MCF 10A (cell line): ENCODE measurements at regions of chr10 and their contacts with region 1.

Region 1: GRCh38 chr10:109883859-109884771 is 39.2 kb downstream of the XPNPEP1 start:
- DNase-seq: peak; percentile 90
- H3K4me3 Mint-ChIP-seq: no peak overlapping the region
- H3K27ac Mint-ChIP-seq: no peak overlapping the region
- H3K4me1 Mint-ChIP-seq: no peaks in the 10 kb centered on the region
- H3K27me3 Mint-ChIP-seq: no peaks in the 10 kb centered on the region
- CTCF ChIP-seq: peak; percentile 92

Region 2: DNA sequence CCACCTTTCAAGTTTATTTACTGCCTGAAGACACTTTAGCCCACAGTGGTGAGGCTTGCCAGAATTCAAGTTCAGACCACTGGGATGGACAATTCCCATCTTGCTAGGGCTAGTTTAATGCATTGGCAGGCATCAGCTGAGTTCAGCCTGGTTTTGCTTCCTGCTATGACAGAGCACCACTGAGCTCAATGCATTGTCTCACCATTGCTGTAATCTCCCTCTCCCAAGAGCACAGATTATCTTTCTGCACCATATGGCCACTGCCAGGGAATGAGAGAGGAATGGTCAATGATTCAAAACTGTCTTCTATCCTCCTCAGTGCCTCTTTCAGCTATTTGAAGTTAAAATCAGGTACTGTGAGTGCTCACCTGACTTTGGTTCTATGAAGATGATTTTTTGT is 121.6 kb before region 1 on chr10:
- CTCF ChIA-PET with region 1: no interaction called
- POLR2A ChIA-PET with region 1: no interaction called
- intact Hi-C with region 1: no loop called
- DNase-seq: no peak
- H3K4me3 Mint-ChIP-seq: no peak overlapping the region
- H3K27ac Mint-ChIP-seq: no peak overlapping the region
- H3K4me1 Mint-ChIP-seq: no peaks in the 10 kb centered on the region
- H3K27me3 Mint-ChIP-seq: no peaks in the 10 kb centered on the region
- CTCF ChIP-seq: no peak

Region 3: DNA sequence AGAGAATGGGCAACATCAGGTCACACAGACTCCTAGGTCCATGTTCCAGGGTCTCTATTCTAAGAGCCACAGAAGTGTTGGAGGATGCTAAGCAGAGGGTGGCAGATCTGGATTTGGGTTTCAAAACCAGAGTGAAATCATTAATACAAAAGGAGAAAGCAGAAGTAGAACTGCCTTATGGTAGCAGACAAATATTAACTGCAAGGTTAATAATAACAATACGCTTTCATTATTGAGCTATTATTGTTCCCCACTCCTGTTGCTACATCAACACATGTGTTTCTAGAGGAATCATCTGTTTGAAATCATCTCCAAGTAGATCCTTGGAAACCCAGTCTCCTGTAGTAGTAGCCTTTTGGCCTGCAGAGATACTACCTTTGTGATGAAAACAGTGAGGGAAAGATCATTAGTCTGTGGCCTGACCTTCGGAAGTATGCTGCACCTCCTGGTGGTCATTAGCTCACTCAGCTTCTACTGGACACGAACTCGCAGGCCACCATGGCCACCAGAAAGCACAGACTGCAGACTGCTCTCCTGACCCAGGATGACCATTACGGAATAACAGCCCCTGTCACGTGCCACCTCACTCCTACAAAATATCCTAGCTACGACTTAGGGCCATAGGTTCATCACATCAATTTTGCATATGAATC is 45.4 kb before region 1 on chr10:
- CTCF ChIA-PET with region 1: no interaction called
- POLR2A ChIA-PET with region 1: no interaction called
- intact Hi-C with region 1: no loop called
- DNase-seq: no peak
- H3K4me3 Mint-ChIP-seq: no peak overlapping the region
- H3K27ac Mint-ChIP-seq: no peak overlapping the region
- H3K4me1 Mint-ChIP-seq: no peaks in the 10 kb centered on the region
- H3K27me3 Mint-ChIP-seq: no peaks in the 10 kb centered on the region
- CTCF ChIP-seq: no peak

Region 4: GRCh38 chr10:109894516-109894915 is 10.4 kb after region 1 on chr10:
- CTCF ChIA-PET with region 1: interaction called, 44 read pairs
- POLR2A ChIA-PET with region 1: interaction called, 7 read pairs
- intact Hi-C with region 1: no loop called
- DNase-seq: peak; percentile 90
- H3K4me3 Mint-ChIP-seq: peak overlapping the region; percentile 31
- H3K27ac Mint-ChIP-seq: peak overlapping the region; percentile 83
- H3K4me1 Mint-ChIP-seq: peaks cover 38% of the 10 kb centered on the region
- H3K27me3 Mint-ChIP-seq: no peaks in the 10 kb centered on the region
- CTCF ChIP-seq: no peak

Region 5: GRCh38 chr10:109922976-109923921 is 39.1 kb after region 1 on chr10 and contains the start of gene XPNPEP1:
- CTCF ChIA-PET with region 1: interaction called, 5 read pairs
- POLR2A ChIA-PET with region 1: interaction called, 122 read pairs
- intact Hi-C with region 1: loop called (anchors 2 kb)
- DNase-seq: peak; percentile 79
- H3K4me3 Mint-ChIP-seq: peak within 1 kb of the TSS; percentile 67
- H3K27ac Mint-ChIP-seq: peak within 1 kb of the TSS; percentile 91
- H3K4me1 Mint-ChIP-seq: peaks cover 34% of the 10 kb centered on the region
- H3K27me3 Mint-ChIP-seq: no peaks in the 10 kb centered on the region
- CTCF ChIP-seq: no peak
- total RNA-seq, gene XPNPEP1: 51.6 and 52.1 TPM in 2 replicates

Region 6: DNA sequence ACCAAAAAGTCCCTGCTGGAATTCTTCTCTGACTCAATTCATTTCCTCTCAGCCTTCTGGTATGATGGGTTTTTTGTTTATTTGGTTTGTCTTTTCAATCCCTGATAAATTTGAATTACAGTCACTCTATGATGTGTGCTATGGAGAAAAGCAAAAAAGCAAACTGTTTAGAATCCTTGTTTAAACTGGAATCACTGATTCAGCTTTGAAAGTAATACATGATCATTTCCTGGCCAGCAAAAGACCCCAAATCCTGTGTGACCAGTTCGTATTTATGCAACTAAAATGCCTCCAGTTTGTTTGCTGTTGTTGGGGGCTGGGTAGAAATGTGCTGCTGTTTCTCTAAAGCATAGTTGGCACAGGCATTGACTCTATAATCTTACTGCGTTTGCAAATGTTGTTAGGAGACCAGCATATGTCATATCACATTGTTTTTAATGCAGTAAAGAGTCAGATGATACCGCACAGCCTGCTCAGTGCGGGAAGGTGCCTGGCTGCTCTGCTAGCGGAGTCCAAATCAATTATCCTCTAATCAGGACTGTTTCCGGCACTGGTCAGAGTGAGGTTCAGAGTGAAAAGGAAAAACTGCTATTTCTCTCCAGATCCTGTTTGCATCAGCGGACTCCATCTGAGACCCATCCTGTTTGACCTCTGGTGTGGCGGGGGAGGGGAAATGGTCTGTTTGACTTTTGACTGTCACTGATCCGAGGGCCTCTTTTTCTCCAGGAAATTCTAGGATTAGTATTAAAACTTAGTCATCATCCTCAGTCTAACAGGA is 83.0 kb after region 1 on chr10:
- CTCF ChIA-PET with region 1: no interaction called
- POLR2A ChIA-PET with region 1: no interaction called
- intact Hi-C with region 1: no loop called
- DNase-seq: no peak
- H3K4me3 Mint-ChIP-seq: no peak overlapping the region
- H3K27ac Mint-ChIP-seq: no peak overlapping the region
- H3K4me1 Mint-ChIP-seq: peaks cover 6% of the 10 kb centered on the region
- H3K27me3 Mint-ChIP-seq: no peaks in the 10 kb centered on the region
- CTCF ChIP-seq: no peak

Region 7: DNA sequence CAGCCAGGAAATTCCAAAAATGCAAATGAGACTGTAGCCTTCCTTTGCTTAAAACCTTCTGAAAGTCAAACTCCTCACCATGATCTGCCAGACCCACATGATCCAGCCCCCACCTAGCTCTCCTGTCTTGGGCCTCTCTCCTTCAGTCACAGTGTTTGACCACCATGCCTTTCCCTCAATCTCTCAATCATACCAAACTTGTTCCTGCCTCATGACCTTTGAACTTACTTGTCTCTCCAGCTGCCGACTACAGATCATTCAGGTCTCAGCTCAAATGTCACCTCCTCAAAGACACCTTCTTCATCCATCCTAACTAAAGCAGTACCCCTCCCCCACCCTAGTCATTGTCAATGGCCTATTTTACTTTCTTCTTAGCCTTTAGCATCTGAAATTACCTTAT is 114.4 kb after region 1 on chr10:
- CTCF ChIA-PET with region 1: interaction called, 10 read pairs
- POLR2A ChIA-PET with region 1: no interaction called
- intact Hi-C with region 1: no loop called
- DNase-seq: no peak
- H3K4me3 Mint-ChIP-seq: no peak overlapping the region
- H3K27ac Mint-ChIP-seq: no peak overlapping the region
- H3K4me1 Mint-ChIP-seq: peaks cover 6% of the 10 kb centered on the region
- H3K27me3 Mint-ChIP-seq: no peaks in the 10 kb centered on the region
- CTCF ChIP-seq: no peak

Region 8: GRCh38 chr10:110032801-110033700 is 148.9 kb after region 1 on chr10:
- CTCF ChIA-PET with region 1: interaction called, 13 read pairs
- POLR2A ChIA-PET with region 1: no interaction called
- intact Hi-C with region 1: no loop called
- DNase-seq: no peak
- H3K4me3 Mint-ChIP-seq: no peak overlapping the region
- H3K27ac Mint-ChIP-seq: no peak overlapping the region
- H3K4me1 Mint-ChIP-seq: no peaks in the 10 kb centered on the region
- H3K27me3 Mint-ChIP-seq: no peaks in the 10 kb centered on the region
- CTCF ChIP-seq: no peak

Region 9: GRCh38 chr10:110137142-110137545 is 253.0 kb after region 1 on chr10:
- CTCF ChIA-PET with region 1: interaction called, 30 read pairs
- POLR2A ChIA-PET with region 1: interaction called, 3 read pairs
- intact Hi-C with region 1: loop called (anchors 1 kb)
- DNase-seq: peak; percentile 74
- H3K4me3 Mint-ChIP-seq: no peak overlapping the region
- H3K27ac Mint-ChIP-seq: peak overlapping the region; percentile 58
- H3K4me1 Mint-ChIP-seq: peaks cover 14% of the 10 kb centered on the region
- H3K27me3 Mint-ChIP-seq: no peaks in the 10 kb centered on the region
- CTCF ChIP-seq: peak; percentile 64